Activated CD4-positive, alpha-beta T cell treated with anti-CD3 and anti-CD28 coated beads for 36 hours (primary cell): ENCODE measurements at regions of chr7 and their contacts with region 1.

Region 1: DNA sequence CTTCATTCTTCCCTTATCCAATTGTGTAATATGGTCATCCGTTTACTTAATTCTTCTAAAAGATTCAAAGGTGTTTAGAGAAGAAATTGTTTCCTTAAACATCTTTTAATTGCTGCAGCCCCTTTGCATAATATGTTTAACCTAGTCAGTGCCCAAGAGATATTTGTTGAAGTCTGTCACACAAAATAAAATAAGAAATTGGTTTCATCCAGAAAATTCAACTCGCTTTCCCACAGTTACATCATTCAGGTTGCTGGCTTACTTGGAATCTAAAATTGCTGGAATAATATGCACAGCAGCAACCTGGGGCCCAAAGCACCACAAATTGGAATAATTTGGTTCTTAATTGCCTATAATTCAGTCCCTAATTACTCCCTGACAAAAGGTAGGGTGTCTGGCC is 155.1 kb upstream of the ETV1 start:
- DNase-seq: no peak
- ATAC-seq: no peak
- H3K4me3 Mint-ChIP-seq: no peak overlapping the region
- H3K27ac Mint-ChIP-seq: no peak overlapping the region
- H3K4me1 Mint-ChIP-seq: no peaks in the 10 kb centered on the region
- H3K27me3 Mint-ChIP-seq: no peaks in the 10 kb centered on the region

Region 2: GRCh38 chr7:12954380-12955033 is 1190.0 kb before region 1 on chr7:
- CTCF ChIA-PET with region 1: no interaction called
- POLR2A ChIA-PET with region 1: no interaction called
- intact Hi-C with region 1: no loop called
- DNase-seq: no peak
- ATAC-seq: no peak
- H3K4me3 Mint-ChIP-seq: no peak overlapping the region
- H3K27ac Mint-ChIP-seq: no peak overlapping the region
- H3K4me1 Mint-ChIP-seq: no peaks in the 10 kb centered on the region
- H3K27me3 Mint-ChIP-seq: no peaks in the 10 kb centered on the region

Region 3: GRCh38 chr7:13312327-13312726 is 832.2 kb before region 1 on chr7:
- CTCF ChIA-PET with region 1: no interaction called
- POLR2A ChIA-PET with region 1: no interaction called
- intact Hi-C with region 1: no loop called
- DNase-seq: peak; percentile 6
- ATAC-seq: no peak
- H3K4me3 Mint-ChIP-seq: no peak overlapping the region
- H3K27ac Mint-ChIP-seq: no peak overlapping the region
- H3K4me1 Mint-ChIP-seq: no peaks in the 10 kb centered on the region
- H3K27me3 Mint-ChIP-seq: no peaks in the 10 kb centered on the region

Region 4: GRCh38 chr7:14207138-14207537 is 62.6 kb after region 1 on chr7:
- CTCF ChIA-PET with region 1: no interaction called
- POLR2A ChIA-PET with region 1: no interaction called
- intact Hi-C with region 1: loop called in 1 of 2 experiments (anchors 10 kb)
- DNase-seq: no peak
- ATAC-seq: no peak
- H3K4me3 Mint-ChIP-seq: no peak overlapping the region
- H3K27ac Mint-ChIP-seq: no peak overlapping the region
- H3K4me1 Mint-ChIP-seq: no peaks in the 10 kb centered on the region
- H3K27me3 Mint-ChIP-seq: no peaks in the 10 kb centered on the region